PC-9 (cell line): ENCODE measurements at regions of chr1 and their contacts with region 1.

Region 1: DNA sequence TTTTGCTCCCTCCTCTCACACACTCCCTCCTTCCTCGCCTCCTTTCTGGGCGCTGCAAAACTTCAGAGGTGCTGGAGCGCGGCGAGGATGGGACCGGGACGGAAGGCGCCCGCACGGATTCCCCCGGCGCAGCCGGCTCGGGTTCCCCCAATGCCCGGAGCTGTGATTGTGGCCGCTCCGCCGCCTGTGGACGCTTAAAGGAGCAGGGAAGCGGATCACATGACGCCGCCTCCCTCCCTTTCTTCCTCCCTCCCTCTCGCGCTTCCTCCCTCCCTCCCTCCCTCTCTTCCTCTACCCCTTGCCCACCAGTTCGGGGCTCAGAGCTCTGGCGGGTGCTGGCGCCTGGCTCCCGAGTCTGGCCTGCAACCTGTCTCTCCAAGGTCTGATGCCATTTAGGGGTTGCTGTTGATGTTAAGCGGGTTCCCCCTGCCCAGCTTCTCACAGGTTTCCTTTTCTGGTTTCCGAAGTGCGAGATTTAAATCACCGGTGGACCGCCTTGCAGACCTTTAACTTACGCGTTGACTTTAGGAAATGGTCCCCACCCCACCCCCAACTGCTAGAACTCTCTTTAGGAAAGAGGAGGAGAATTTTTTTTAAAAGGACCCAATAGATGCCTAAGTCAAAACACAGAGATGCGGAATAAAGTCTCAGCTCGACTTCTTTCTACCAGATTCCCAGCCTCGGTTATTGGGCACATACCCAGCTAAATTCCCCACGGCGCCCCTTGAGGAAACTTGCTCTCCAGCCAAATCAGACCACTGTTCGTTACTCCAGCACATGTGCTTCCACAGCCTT is at the start of gene WLS:
- DNase-seq: peak in 1 of 2 experiments; percentile 59
- H3K4me3 ChIP-seq: peak within 1 kb of the TSS; percentile 61
- H3K27ac ChIP-seq: no peak within 1 kb of the TSS
- H3K4me1 ChIP-seq: peaks cover 6% of the 10 kb centered on the region; the same call in 1 of the 2 replicates
- H3K27me3 ChIP-seq: peaks cover 4% of the 10 kb centered on the region
- CTCF ChIP-seq: no peak; the same call in 1 of the 2 replicates
- total RNA-seq, gene WLS: 19.8 and 30.5 TPM in 2 replicates

Region 2: GRCh38 chr1:68185743-68186142 is 46.8 kb before region 1 on chr1:
- CTCF ChIA-PET with region 1: interaction called, 10 read pairs
- POLR2A ChIA-PET with region 1: no interaction called
- intact Hi-C with region 1: no loop called
- DNase-seq: peak; percentile 35 to 78
- H3K4me3 ChIP-seq: no peak overlapping the region
- H3K27ac ChIP-seq: no peak overlapping the region
- H3K4me1 ChIP-seq: peaks cover 10% of the 10 kb centered on the region; the same call in 1 of the 2 replicates
- H3K27me3 ChIP-seq: no peaks in the 10 kb centered on the region
- CTCF ChIP-seq: no peak

Region 3: GRCh38 chr1:68197891-68198290 is 34.7 kb before region 1 on chr1:
- CTCF ChIA-PET with region 1: interaction called, 20 read pairs
- POLR2A ChIA-PET with region 1: interaction called, 7 read pairs
- intact Hi-C with region 1: no loop called
- DNase-seq: peak in 1 of 2 experiments; percentile 97
- H3K4me3 ChIP-seq: peak overlapping the region; percentile 12; the same call in 1 of the 2 replicates
- H3K27ac ChIP-seq: peak overlapping the region; percentile 72
- H3K4me1 ChIP-seq: peaks cover 28% of the 10 kb centered on the region
- H3K27me3 ChIP-seq: no peaks in the 10 kb centered on the region
- CTCF ChIP-seq: no peak

Region 4: DNA sequence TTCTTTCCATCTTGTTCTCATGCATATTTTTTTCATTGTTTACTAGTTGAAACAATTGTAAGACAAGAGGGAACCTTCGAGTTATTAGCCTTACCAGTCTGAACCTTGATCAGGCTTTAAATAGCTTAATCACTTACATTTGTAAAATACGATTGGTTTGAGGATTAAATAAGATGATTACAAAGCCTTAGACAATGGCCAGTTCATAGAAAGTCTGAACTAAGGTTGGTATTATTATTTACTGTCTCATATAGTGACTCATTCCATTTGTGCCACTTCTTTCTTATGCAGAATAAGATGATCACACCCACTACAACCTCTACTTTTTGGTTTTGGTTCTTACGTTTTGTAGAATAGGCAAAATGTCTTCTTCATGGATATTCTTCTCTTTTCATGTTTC is 123.1 kb after region 1 on chr1:
- CTCF ChIA-PET with region 1: no interaction called
- POLR2A ChIA-PET with region 1: no interaction called
- intact Hi-C with region 1: no loop called
- DNase-seq: no peak
- H3K4me3 ChIP-seq: no peak overlapping the region
- H3K27ac ChIP-seq: no peak overlapping the region
- H3K4me1 ChIP-seq: 0 out of 2 replicates have a peak, but pooled peaks cover 5% of the 10 kb centered on the region
- H3K27me3 ChIP-seq: no peaks in the 10 kb centered on the region
- CTCF ChIP-seq: no peak